ENCODE measurements at regions of chr19 and their contacts with region 1.

Region 1: DNA sequence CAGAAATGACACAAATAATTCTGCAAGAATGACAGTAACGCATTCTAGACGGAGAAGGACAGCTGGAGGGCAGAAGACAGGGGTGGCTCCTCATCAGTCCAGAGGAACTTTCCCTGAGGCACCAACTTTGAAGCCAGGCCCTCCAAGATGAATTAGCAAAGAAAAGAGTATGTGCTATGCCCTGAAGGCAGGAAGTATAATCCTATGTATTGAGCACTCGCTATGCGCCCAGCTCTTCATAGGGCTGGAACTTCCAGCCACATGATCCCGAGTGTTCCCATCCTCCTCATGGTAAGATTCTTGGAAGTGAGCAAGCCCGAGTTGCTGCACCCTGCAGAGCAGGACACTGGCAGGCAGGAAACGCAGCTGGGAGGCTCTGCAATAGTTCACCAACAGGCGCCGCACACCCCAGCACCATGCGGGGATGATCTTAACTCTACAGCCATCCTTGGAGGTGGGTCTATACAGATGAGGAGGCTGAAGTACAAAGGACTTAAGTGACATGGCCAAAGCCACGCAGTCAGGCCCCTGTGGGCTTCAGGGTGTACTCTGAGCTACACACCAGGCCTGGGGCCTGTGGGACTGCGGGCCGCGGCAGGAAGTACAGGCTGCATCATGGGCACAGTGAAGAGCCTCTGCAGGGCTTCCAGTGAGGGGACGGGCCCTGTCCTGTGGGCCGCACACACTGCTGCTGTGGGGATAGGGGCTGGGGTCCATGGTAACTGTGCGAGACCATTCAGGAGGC is 25.2 kb downstream of the C19orf47 start:
- DNase-seq: no peak
- ATAC-seq: peak; percentile 10
- H3K4me3 ChIP-seq: no peak overlapping the region
- H3K27ac ChIP-seq: no peak overlapping the region
- H3K4me1 ChIP-seq: no peaks in the 10 kb centered on the region
- H3K27me3 ChIP-seq: no peaks in the 10 kb centered on the region
- CTCF ChIP-seq: no peak

Region 2: GRCh38 chr19:38538793-38539528 is 1784.1 kb before region 1 on chr19:
- CTCF ChIA-PET with region 1: no interaction called
- POLR2A ChIA-PET with region 1: interaction called, 14 read pairs
- in situ Hi-C with region 1: no loop called
- intact Hi-C with region 1: no loop called
- DNase-seq: no peak
- ATAC-seq: no peak
- H3K4me3 ChIP-seq: no peak overlapping the region
- H3K27ac ChIP-seq: no peak overlapping the region
- H3K4me1 ChIP-seq: peaks cover 5% of the 10 kb centered on the region
- H3K27me3 ChIP-seq: peaks cover 11% of the 10 kb centered on the region
- CTCF ChIP-seq: no peak

Region 3: DNA sequence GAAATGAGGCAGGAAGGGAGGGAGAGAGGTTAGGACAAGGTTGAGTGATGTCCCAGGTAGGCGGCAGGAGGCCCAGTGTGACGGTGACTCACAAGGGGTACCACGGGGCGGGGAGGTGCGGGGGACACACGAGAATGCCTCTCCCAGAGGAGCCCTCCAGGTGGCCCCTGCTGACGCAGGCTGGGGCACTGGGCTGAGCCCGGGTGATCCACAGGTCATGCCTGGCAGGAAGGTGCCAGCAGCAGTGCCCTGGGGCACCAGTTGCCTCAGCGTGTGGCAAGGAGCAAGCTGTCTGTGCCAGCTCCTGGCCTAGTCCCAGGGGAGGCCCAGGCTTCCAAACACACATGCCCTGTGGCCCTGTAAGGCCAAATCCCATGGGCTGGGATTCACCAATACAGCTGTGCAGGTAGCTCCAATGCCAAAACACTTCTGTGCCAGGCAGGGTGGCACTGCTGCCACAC is 66.0 kb before region 1 on chr19:
- CTCF ChIA-PET with region 1: interaction called, 10 read pairs
- POLR2A ChIA-PET with region 1: no interaction called
- in situ Hi-C with region 1: no loop called
- intact Hi-C with region 1: no loop called
- DNase-seq: no peak
- ATAC-seq: peak; percentile 51
- H3K4me3 ChIP-seq: no peak overlapping the region
- H3K27ac ChIP-seq: no peak overlapping the region
- H3K4me1 ChIP-seq: peaks cover 12% of the 10 kb centered on the region
- H3K27me3 ChIP-seq: no peaks in the 10 kb centered on the region
- CTCF ChIP-seq: no peak

Region 4: DNA sequence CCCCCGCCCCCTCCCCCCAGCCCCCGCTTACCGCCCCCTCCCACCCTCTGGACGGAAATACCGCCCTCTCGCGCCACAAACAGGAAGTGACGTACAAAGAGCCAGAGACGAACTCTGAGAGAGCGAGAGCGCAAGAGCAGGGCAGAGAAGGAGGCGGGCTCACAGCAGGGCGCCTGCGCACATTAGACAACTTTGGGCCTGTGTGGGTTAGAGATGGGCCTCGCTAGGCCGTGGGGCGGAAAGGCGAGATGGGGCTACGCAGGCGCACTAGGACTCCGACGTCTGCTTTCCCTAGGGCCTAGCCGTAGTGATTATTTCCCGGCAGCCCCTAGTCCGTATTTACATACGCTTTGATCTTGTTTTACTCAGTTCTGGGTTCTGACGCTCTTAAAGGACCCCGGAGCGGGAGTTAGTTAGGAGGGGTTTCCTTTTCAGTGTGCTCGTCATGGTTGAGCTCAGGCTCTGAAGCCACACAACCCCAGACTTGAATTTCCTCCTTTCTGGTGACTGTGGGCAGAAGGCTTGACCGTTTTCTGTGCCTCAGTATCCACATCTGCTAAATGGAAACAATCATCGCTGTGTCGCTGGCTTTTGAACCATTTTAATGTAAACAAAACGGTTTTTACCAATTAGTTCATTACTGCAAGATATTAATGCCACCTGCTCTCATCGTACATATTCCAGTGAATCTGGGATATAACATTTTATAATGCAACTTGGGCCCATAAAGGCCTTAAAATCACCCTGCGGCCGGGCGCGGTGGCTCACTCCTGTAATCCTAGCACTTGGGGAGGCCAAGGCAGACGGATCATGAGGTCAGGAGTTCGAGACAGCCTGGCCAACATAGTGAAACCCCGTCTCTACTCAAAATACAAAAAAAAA is 37.4 kb before region 1 on chr19:
- CTCF ChIA-PET with region 1: no interaction called
- POLR2A ChIA-PET with region 1: interaction called, 10 read pairs
- in situ Hi-C with region 1: no loop called
- intact Hi-C with region 1: no loop called
- DNase-seq: peak; percentile 100
- ATAC-seq: peak; percentile 96
- H3K4me3 ChIP-seq: peak overlapping the region; percentile 36 to 47
- H3K27ac ChIP-seq: peak overlapping the region; percentile 89
- H3K4me1 ChIP-seq: peaks cover 51% of the 10 kb centered on the region
- H3K27me3 ChIP-seq: no peaks in the 10 kb centered on the region
- CTCF ChIP-seq: no peak

Region 5: GRCh38 chr19:40294560-40294959 is 28.5 kb before region 1 on chr19:
- CTCF ChIA-PET with region 1: interaction called, 18 read pairs
- POLR2A ChIA-PET with region 1: interaction called, 9 read pairs
- in situ Hi-C with region 1: no loop called
- intact Hi-C with region 1: no loop called
- DNase-seq: no peak
- ATAC-seq: peak; percentile 4
- H3K4me3 ChIP-seq: no peak overlapping the region
- H3K27ac ChIP-seq: no peak overlapping the region
- H3K4me1 ChIP-seq: no peaks in the 10 kb centered on the region
- H3K27me3 ChIP-seq: peaks cover 4% of the 10 kb centered on the region; the same call in 1 of the 2 replicates
- CTCF ChIP-seq: no peak

Region 6: DNA sequence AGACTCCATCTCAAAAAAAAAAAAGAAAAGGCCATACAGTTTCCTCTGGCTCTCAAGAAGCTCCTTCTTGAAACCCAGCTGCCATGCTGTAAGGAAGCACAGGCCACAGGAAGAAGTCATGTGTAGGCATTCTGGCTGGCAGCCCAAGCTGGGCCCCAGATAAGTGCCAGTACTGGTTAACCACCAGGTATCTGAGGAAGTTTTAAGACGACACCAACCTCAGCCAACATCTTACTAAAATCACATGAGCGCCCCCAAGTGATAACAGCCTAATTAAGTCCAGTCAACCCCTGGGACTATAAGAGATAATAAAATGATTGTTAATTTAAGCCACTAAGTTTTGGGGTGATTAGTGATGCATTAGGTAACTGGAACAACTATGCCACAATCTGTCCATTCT is 10.5 kb before region 1 on chr19:
- CTCF ChIA-PET with region 1: interaction called, 498 read pairs
- POLR2A ChIA-PET with region 1: interaction called, 17 read pairs
- in situ Hi-C with region 1: no loop called
- intact Hi-C with region 1: no loop called
- DNase-seq: no peak
- ATAC-seq: no peak
- H3K4me3 ChIP-seq: no peak overlapping the region
- H3K27ac ChIP-seq: no peak overlapping the region
- H3K4me1 ChIP-seq: no peaks in the 10 kb centered on the region
- H3K27me3 ChIP-seq: peaks cover 12% of the 10 kb centered on the region; the same call in 1 of the 2 replicates
- CTCF ChIP-seq: no peak

Region 7: DNA sequence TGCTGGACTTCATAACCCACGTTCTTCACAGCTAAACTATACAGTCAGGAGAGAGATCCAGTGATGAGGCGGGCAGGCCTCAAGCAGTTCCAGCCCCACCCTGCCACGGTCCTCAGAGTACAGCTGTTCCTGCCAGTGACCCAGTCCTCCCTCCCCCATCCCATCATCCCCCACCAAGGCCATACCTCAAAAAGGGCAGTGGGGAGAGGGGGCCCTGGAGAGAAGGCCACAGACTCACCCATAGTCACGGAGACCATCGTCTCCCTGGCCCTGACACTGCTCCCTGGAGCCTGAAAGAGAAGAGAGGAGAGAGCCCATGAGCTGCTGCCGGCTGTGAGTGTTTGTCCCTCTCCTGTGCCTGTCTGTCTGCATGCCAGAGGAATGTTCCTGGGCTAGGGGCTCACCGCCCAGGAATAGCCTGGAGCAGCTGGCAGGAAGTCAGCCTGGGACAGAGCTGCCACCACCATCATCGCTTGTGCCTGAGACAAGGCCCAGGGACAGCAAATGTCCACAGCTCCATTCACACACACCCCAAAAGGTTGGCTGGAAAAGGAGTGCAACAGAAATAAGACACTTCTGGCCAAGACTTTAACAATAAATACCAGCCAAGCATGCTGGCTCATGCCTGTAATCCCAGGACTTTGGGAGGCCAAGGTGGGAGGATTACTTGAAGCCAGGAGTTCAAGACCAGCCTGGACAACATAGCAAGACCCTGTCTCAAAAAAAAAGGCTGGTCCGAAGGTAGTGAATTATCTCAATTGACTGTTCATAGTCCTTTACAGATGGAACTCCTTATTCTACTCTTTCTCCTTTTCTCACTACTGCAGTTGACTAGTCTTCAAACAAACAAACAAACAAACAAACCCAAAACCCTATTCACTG is 18.8 kb after region 1 on chr19:
- CTCF ChIA-PET with region 1: interaction called, 9 read pairs
- POLR2A ChIA-PET with region 1: interaction called, 19 read pairs
- in situ Hi-C with region 1: no loop called
- intact Hi-C with region 1: no loop called
- DNase-seq: no peak
- ATAC-seq: peak; percentile 67
- H3K4me3 ChIP-seq: no peak overlapping the region
- H3K27ac ChIP-seq: no peak overlapping the region
- H3K4me1 ChIP-seq: no peaks in the 10 kb centered on the region
- H3K27me3 ChIP-seq: peaks cover 2% of the 10 kb centered on the region; the same call in 1 of the 2 replicates
- CTCF ChIP-seq: no peak

Measured in Panc1 (cell line).